ENCODE measurements at regions of chr17 and their contacts with region 1.

Region 1: DNA sequence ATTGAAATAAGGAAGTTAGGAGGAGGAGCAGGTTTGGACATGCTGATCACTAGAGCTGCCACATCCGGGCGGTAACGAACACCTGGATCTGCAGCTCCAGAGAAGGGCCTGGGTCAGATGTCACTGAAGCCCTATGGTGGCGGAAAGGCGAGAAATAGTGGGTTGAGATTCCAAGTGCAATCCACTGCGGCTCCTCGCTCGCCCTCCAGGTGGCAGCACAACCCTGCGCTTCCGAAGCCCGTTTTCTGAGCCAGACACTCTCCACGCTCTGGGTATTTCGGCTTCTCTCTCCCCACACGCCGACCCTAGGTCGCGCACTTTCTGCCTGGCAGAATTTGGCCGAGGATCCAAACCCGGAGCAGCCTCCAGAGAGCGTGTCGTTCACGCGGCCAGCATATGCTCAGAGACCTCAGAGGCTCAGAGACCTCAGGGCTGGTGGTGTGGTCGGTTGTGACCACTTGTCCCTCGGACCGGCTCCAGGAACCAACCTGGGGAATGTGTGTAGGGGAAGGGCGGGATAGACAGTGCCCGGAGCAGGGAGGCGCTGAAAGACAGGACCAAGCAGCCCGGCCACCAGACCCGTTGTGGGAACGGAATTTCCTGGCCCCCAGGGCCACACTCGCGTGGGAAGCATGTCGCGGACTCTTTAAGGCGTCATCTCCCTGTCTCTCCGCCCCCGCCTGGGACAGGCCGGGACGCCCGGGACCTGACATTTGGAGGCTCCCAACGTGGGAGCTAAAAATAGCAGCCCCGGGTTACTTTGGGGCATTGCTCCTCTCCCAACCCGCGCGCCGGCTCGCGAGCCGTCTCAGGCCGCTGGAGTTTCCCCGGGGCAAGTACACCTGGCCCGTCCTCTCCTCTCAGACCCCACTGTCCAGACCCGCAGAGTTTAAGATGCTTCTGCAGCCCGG is 744 bp upstream of the SLC2A4 start:
- DNase-seq: peak; percentile 83 to 92 (median 88)
- H3K4me3 ChIP-seq: peak overlapping the region in 3 of 4 donors; percentile 5 to 59 (median 23)
- H3K27ac ChIP-seq: peak overlapping the region; percentile 60 to 92 (median 85)
- H3K4me1 ChIP-seq: peaks cover 18 to 21% of the 10 kb centered on the region in 2 donors
- H3K27me3 ChIP-seq: no peaks in the 10 kb centered on the region
- CTCF ChIP-seq: peak; percentile 85 to 99 (median 96)
- POLR2A ChIP-seq: peak; percentile 9 to 52

Region 2: DNA sequence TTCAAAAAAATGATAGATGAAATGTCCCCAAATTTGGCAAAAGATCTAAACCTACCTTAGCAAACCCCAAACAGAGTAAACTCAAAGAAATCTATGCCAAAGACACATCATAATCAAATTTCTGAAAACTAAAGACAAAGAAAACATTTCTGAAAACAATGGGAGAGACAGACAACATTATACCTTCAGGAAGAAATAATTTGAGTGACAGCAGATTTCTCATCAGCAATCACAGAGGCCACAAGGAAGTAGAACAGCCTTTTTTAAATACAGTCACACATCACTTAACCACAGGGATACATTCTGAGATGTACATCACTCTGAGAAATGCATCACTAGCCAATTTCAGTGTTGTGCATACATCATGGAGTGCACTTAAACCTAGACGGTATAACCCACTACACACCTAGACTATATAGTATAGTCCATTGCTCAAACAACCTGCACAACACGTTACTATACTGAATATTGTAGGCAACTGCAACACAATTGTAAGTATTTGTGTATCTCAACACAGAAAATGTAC is 309.8 kb before region 1 on chr17:
- intact Hi-C with region 1: no loop called
- DNase-seq: no peak
- H3K4me3 ChIP-seq: no peak overlapping the region
- H3K27ac ChIP-seq: no peak overlapping the region
- H3K4me1 ChIP-seq: no peaks in the 10 kb centered on the region
- H3K27me3 ChIP-seq: no peaks in the 10 kb centered on the region
- CTCF ChIP-seq: no peak
- POLR2A ChIP-seq: no peak

Region 3: GRCh38 chr17:7239091-7240027 is 41.4 kb before region 1 on chr17 and contains the start of gene PHF23:
- intact Hi-C with region 1: no loop called
- DNase-seq: peak; percentile 99 to 100 (median 99)
- H3K4me3 ChIP-seq: peak within 1 kb of the TSS; percentile 86 to 95 (median 92)
- H3K27ac ChIP-seq: peak within 1 kb of the TSS; percentile 87 to 100 (median 95)
- H3K4me1 ChIP-seq: peaks cover 46 to 47% of the 10 kb centered on the region in 2 donors
- H3K27me3 ChIP-seq: no peaks in the 10 kb centered on the region
- CTCF ChIP-seq: peak in 3 of 6 experiments; percentile 19 to 49 (median 42)
- POLR2A ChIP-seq: peak in 1 of 2 donors; percentile 64
- total RNA-seq, gene PHF23: 33.5 to 141 (median 66.8) TPM

Region 4: GRCh38 chr17:7296189-7296902 is 15.6 kb after region 1 on chr17:
- intact Hi-C with region 1: loop called in 1 of 2 experiments (anchors 2 kb)
- DNase-seq: peak; percentile 84 to 89 (median 87)
- H3K4me3 ChIP-seq: no peak overlapping the region
- H3K27ac ChIP-seq: no peak overlapping the region
- H3K4me1 ChIP-seq: peaks cover 12 to 28% of the 10 kb centered on the region in 2 donors
- H3K27me3 ChIP-seq: peaks cover 10% of the 10 kb centered on the region
- CTCF ChIP-seq: peak; percentile 71 to 98 (median 90)
- POLR2A ChIP-seq: peak in 1 of 2 donors; percentile 9

Region 5: DNA sequence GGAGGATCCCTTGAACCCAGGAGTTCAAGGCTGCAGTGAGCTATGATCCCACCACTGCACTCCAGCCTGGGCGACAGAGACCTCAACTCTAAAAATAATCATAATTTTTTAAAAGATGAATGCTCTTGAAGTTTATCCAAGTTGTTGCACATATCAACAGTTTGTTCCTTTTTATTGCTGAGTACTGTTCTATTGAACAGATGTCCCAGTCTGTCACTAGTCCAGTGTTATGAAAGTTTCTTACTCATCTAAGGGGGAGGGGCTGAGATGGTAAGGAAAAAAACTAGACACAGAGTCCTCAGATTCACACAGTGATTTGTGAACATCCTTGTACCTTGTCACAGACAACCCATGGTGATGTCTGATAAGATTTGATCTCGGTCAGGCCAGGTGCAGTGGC is 59.4 kb after region 1 on chr17:
- intact Hi-C with region 1: loop called in 1 of 2 experiments (anchors 5 kb)
- DNase-seq: no peak
- H3K4me3 ChIP-seq: no peak overlapping the region
- H3K27ac ChIP-seq: no peak overlapping the region
- H3K4me1 ChIP-seq: no peaks in the 10 kb centered on the region
- H3K27me3 ChIP-seq: no peaks in the 10 kb centered on the region
- CTCF ChIP-seq: no peak
- POLR2A ChIP-seq: no peak

Measured in adrenal gland (tissue), 19 donors.